Astrocyte of the cerebellum (primary cell): ENCODE measurements at regions of chr1 and their contacts with region 1.

Region 1: DNA sequence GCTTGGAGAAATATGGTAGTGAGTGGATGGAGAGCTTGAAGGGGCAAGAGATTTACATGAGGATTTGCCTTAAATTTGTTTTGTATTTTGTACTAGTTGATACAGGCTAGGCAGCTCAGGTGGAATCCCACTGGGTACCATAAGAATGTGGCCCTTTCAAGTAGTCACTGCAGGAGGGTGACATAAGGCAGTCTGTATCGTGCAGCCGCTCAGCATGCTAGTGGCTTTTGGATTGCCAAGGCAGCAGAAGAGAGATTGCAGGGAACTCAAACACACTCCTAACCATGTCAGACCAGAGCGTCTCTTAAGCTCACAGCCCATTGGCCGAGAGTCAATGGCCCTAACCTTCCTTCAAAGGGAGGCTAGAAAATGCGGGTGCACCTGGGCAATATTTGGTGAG is 420.0 kb downstream of the ADGRL2 start:
- DNase-seq: no peak
- H3K4me3 ChIP-seq: no peak overlapping the region
- CTCF ChIP-seq: no peak

Region 2: DNA sequence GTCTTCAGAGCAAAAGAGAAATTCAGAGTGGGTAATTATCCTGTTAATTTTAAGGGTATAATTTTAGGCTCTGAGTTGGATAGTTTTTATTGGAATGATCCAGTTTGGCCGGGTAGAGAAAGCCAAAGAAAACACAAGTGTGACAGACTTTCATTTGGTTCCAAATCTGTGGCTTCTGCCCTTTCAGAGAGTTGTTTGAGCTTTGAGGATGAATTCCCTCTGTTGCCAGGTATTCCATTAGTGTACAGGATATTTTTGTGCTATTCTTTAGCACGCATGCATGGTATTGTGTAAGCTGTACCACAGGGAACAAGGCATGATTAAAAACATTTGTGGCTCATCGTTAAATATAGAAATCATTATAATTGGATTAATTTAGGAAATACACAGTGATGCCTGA is 35.7 kb before region 1 on chr1:
- in situ Hi-C with region 1: loop called (anchors 5 kb)
- DNase-seq: peak; percentile 59
- H3K4me3 ChIP-seq: no peak overlapping the region
- CTCF ChIP-seq: no peak